MCF 10A (cell line): ENCODE measurements at regions of chr9 and their contacts with region 1.

Region 1: DNA sequence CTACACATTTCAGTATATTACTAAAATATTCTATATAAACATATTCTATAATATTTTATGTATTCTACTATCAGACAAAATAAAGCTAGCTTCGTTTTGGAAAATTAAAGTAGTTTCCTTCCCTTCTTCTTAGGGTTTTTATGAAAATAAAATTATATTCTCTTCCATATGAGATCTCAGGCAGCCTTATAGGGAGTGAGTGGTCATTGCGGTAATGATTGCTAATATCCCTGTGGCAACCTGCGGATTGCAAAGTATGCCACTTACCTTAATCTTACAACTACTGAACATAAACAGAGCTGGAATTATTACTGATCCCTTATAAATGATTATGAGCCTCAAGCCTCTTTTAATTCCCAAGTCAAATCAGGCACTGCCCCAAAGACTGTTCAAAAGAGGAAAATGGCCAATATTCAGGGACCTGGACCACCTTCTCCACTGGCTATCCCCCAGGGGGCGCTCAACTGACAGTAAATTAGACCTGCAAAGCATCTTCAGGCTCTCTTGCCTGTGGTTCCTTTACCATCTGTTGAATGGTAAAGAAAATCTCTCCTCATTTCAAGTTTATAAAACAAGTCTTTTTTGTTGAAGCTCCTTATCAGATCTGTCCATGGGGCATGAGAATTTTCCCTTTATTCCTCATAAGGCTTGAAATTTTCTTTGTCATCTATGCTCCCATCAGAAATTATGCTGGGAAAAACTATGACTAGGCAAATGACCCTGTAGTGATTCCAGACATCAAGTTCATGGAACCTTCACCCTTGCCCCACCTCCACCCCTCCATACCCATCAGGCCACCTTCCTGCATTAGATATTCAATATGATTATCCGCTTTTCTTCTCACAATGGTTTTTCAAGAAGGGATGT is 163.9 kb downstream of the CEMIP2 start:
- DNase-seq: peak; percentile 79
- H3K4me3 Mint-ChIP-seq: no peak overlapping the region
- H3K27ac Mint-ChIP-seq: no peak overlapping the region
- H3K4me1 Mint-ChIP-seq: no peaks in the 10 kb centered on the region
- H3K27me3 Mint-ChIP-seq: no peaks in the 10 kb centered on the region
- CTCF ChIP-seq: peak; percentile 69

Region 2: GRCh38 chr9:70258692-70259511 is 1345.5 kb before region 1 on chr9 and contains the start of gene SMC5:
- CTCF ChIA-PET with region 1: no interaction called
- POLR2A ChIA-PET with region 1: no interaction called
- intact Hi-C with region 1: no loop called
- DNase-seq: peak; percentile 90
- H3K4me3 Mint-ChIP-seq: peak within 1 kb of the TSS; percentile 97
- H3K27ac Mint-ChIP-seq: peak within 1 kb of the TSS; percentile 99
- H3K4me1 Mint-ChIP-seq: peaks cover 63% of the 10 kb centered on the region
- H3K27me3 Mint-ChIP-seq: no peaks in the 10 kb centered on the region
- CTCF ChIP-seq: no peak
- total RNA-seq, gene SMC5: 29.8 and 31.9 TPM in 2 replicates

Region 3: GRCh38 chr9:71285191-71285656 is 319.2 kb before region 1 on chr9:
- CTCF ChIA-PET with region 1: interaction called, 8 read pairs
- POLR2A ChIA-PET with region 1: no interaction called
- intact Hi-C with region 1: loop called (anchors 2 kb)
- DNase-seq: peak; percentile 74
- H3K4me3 Mint-ChIP-seq: no peak overlapping the region
- H3K27ac Mint-ChIP-seq: no peak overlapping the region
- H3K4me1 Mint-ChIP-seq: peaks cover 5% of the 10 kb centered on the region
- H3K27me3 Mint-ChIP-seq: peaks cover 32% of the 10 kb centered on the region
- CTCF ChIP-seq: peak; percentile 78

Region 4: DNA sequence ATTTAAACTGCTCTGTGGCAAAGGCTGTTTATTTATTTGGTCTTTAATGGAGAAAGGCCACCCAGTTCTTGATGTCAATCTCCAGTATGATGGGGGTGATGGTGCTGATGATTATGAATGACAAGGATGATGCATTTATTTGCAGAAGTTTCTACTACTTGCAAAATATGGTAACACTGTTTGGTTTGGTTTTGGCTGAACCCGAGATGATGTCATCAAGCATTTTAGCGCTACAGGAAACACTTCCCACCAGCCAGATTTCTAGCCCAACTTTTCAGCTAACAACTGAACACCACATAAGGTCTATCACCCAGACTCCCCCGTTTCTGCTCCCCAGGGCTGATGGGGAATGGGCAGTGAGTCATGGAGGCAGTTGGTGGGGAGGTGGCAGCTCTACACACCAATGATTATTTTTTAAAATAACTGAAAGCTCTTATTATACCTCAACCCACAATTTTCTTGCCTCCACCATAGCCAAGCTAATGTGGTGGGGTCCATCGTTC is 139.1 kb before region 1 on chr9:
- CTCF ChIA-PET with region 1: no interaction called
- POLR2A ChIA-PET with region 1: no interaction called
- intact Hi-C with region 1: no loop called
- DNase-seq: no peak
- H3K4me3 Mint-ChIP-seq: no peak overlapping the region
- H3K27ac Mint-ChIP-seq: no peak overlapping the region
- H3K4me1 Mint-ChIP-seq: no peaks in the 10 kb centered on the region
- H3K27me3 Mint-ChIP-seq: peaks cover 21% of the 10 kb centered on the region
- CTCF ChIP-seq: no peak

Region 5: GRCh38 chr9:71592400-71592799 is 12.0 kb before region 1 on chr9:
- CTCF ChIA-PET with region 1: interaction called, 24 read pairs
- POLR2A ChIA-PET with region 1: no interaction called
- intact Hi-C with region 1: no loop called
- DNase-seq: no peak
- H3K4me3 Mint-ChIP-seq: no peak overlapping the region
- H3K27ac Mint-ChIP-seq: no peak overlapping the region
- H3K4me1 Mint-ChIP-seq: no peaks in the 10 kb centered on the region
- H3K27me3 Mint-ChIP-seq: no peaks in the 10 kb centered on the region
- CTCF ChIP-seq: no peak

Region 6: GRCh38 chr9:71647094-71647591 is 42.7 kb after region 1 on chr9:
- CTCF ChIA-PET with region 1: interaction called, 11 read pairs
- POLR2A ChIA-PET with region 1: no interaction called
- intact Hi-C with region 1: no loop called
- DNase-seq: peak; percentile 93
- H3K4me3 Mint-ChIP-seq: peak overlapping the region; percentile 29
- H3K27ac Mint-ChIP-seq: no peak overlapping the region
- H3K4me1 Mint-ChIP-seq: peaks cover 7% of the 10 kb centered on the region
- H3K27me3 Mint-ChIP-seq: no peaks in the 10 kb centered on the region
- CTCF ChIP-seq: no peak

Region 7: GRCh38 chr9:71709384-71709783 is 105.0 kb after region 1 on chr9:
- CTCF ChIA-PET with region 1: interaction called, 11 read pairs
- POLR2A ChIA-PET with region 1: no interaction called
- intact Hi-C with region 1: no loop called
- DNase-seq: no peak
- H3K4me3 Mint-ChIP-seq: no peak overlapping the region
- H3K27ac Mint-ChIP-seq: no peak overlapping the region
- H3K4me1 Mint-ChIP-seq: no peaks in the 10 kb centered on the region
- H3K27me3 Mint-ChIP-seq: no peaks in the 10 kb centered on the region
- CTCF ChIP-seq: no peak

Region 8: DNA sequence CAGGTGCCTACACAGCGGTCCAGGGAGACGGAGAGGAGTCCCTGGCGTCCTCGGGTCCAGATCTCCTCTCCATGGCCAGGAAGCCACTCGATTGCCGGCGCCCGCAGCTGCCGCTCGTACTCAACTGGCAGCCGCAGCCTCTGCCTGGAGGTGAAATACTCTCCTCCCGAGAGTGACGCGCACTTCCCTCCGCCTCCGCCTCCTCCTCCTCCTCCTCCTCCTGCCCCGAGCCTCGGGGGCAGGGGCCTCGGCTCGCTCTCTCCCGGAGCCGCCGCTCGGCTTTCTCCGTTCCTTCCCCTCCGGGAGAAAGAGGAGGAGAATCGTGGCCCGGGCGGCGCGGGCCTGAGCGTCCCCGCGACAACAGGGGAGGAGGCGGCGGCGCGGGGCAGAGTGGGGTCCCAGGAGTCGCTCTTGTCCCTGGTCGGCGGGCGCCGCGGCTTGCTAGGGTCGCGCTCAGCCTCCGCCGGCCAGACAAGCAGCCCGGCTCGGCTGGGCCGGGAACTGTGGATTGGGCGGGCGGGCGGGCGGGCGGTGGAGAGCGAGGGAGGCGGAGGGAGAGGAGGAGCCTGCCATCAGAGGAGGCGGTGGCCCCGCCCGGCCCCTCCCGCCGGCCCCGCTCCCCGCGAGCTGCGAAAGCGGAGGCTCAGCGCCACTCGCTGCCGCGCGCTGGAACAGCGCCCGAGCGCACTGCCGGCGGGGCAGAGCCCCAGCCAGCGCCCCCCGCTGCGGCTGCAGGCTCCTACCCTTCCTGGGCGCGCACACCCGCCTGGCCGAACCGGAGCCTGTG is 164.2 kb after region 1 on chr9 and contains the start of gene CEMIP2:
- CTCF ChIA-PET with region 1: interaction called, 26 read pairs
- POLR2A ChIA-PET with region 1: interaction called, 7 read pairs
- intact Hi-C with region 1: loop called (anchors 1 kb)
- DNase-seq: peak; percentile 93
- H3K4me3 Mint-ChIP-seq: peak within 1 kb of the TSS; percentile 92
- H3K27ac Mint-ChIP-seq: peak within 1 kb of the TSS; percentile 75
- H3K4me1 Mint-ChIP-seq: peaks cover 42% of the 10 kb centered on the region
- H3K27me3 Mint-ChIP-seq: no peaks in the 10 kb centered on the region
- CTCF ChIP-seq: peak; percentile 41
- total RNA-seq, gene CEMIP2: 13.7 and 17.7 TPM in 2 replicates

Region 9: GRCh38 chr9:72022841-72023240 is 418.4 kb after region 1 on chr9:
- CTCF ChIA-PET with region 1: interaction called, 6 read pairs
- POLR2A ChIA-PET with region 1: no interaction called
- intact Hi-C with region 1: loop called (anchors 1 kb)
- DNase-seq: peak; percentile 41
- H3K4me3 Mint-ChIP-seq: no peak overlapping the region
- H3K27ac Mint-ChIP-seq: no peak overlapping the region
- H3K4me1 Mint-ChIP-seq: peaks cover 16% of the 10 kb centered on the region
- H3K27me3 Mint-ChIP-seq: no peaks in the 10 kb centered on the region
- CTCF ChIP-seq: no peak